Heart left ventricle (tissue), 16 donors: ENCODE measurements at regions of chr1 and their contacts with region 1.

Region 1: GRCh38 chr1:33256701-33257399 is 558 bp downstream of the ZNF362 start:
- DNase-seq: peak; percentile 53 to 77 (median 58)
- ATAC-seq: peak in 3 of 4 donors; percentile 21 to 50 (median 40)
- H3K4me3 ChIP-seq: peak overlapping the region; percentile 35 to 99 (median 80)
- H3K27ac ChIP-seq: peak overlapping the region; percentile 51 to 94 (median 88)
- H3K4me1 ChIP-seq: peaks cover 18 to 56% (median 44%) of the 10 kb centered on the region in 12 donors
- H3K27me3 ChIP-seq: no peaks in the 10 kb centered on the region
- CTCF ChIP-seq: no peak
- POLR2A ChIP-seq: no peak

Region 2: DNA sequence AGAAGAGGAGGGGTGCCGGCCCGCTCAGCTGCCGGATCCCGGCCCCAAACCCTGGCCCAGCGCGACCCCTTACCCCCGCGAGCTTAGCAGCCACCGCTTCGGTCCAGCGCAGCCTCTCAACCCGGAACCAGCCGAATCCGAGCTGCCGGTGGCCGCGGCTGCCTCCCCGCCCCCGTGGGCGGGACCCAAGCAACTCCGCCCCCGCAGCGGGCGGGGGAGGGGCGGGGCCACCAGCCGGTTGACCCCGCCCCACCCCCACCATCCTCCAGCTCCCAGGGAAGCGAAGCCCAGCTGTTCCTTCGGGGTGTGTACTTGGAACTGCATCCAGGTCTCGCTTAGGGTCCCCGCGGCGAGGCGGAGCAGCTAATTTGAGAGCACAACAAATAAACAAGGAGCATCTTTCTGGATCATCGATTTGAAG is 74.9 kb before region 1 on chr1 and contains the start of gene TRIM62:
- intact Hi-C with region 1: loop called in 2 of 10 experiments (anchors 1 to 5 kb)
- DNase-seq: peak; percentile 90 to 94 (median 92)
- ATAC-seq: peak; percentile 78 to 92 (median 90)
- H3K4me3 ChIP-seq: peak within 1 kb of the TSS; percentile 59 to 93 (median 85)
- H3K27ac ChIP-seq: peak within 1 kb of the TSS; percentile 29 to 89 (median 76)
- H3K4me1 ChIP-seq: peaks cover 0 to 26% (median 9%) of the 10 kb centered on the region in 12 donors
- H3K27me3 ChIP-seq: peaks cover 0 to 4% (median 0%) of the 10 kb centered on the region in 9 donors
- CTCF ChIP-seq: no peak
- POLR2A ChIP-seq: peak in 1 of 2 donors; percentile 57
- total RNA-seq, gene TRIM62: 1.9 to 6.1 (median 3.3) TPM

Region 3: GRCh38 chr1:33349778-33350610 is 93.1 kb after region 1 on chr1:
- intact Hi-C with region 1: loop called in 1 of 10 experiments (anchors 5 kb)
- DNase-seq: peak; percentile 89 to 94 (median 93)
- ATAC-seq: peak; percentile 81 to 93 (median 88)
- H3K4me3 ChIP-seq: peak overlapping the region; percentile 23 to 99 (median 87)
- H3K27ac ChIP-seq: peak overlapping the region; percentile 86 to 100 (median 98)
- H3K4me1 ChIP-seq: peaks cover 5 to 51% (median 40%) of the 10 kb centered on the region in 12 donors
- H3K27me3 ChIP-seq: no peaks in the 10 kb centered on the region
- CTCF ChIP-seq: peak in 1 of 12 donors; percentile 12
- POLR2A ChIP-seq: peak in 1 of 2 donors; percentile 79